Heart right ventricle (tissue), 16 donors: ENCODE measurements at regions of chr6 and their contacts with region 1.

Region 1: GRCh38 chr6:10510592-10511367 is 10.4 kb upstream of the GCNT2 start:
- DNase-seq: peak; percentile 59 to 65
- ATAC-seq: peak; percentile 89 to 97 (median 94)
- H3K4me3 ChIP-seq: peak overlapping the region in 6 of 10 donors; percentile 7 to 18 (median 12)
- H3K27ac ChIP-seq: peak overlapping the region; percentile 49 to 92 (median 82)
- H3K4me1 ChIP-seq: peaks cover 0 to 30% (median 5%) of the 10 kb centered on the region in 9 donors
- H3K27me3 ChIP-seq: no peaks in the 10 kb centered on the region
- CTCF ChIP-seq: peak; percentile 41 to 80 (median 65)

Region 2: GRCh38 chr6:10175330-10175729 is 335.4 kb before region 1 on chr6:
- intact Hi-C with region 1: no loop called
- DNase-seq: no peak
- ATAC-seq: no peak
- H3K4me3 ChIP-seq: no peak overlapping the region
- H3K27ac ChIP-seq: no peak overlapping the region
- H3K4me1 ChIP-seq: no peaks in the 10 kb centered on the region
- H3K27me3 ChIP-seq: no peaks in the 10 kb centered on the region
- CTCF ChIP-seq: no peak

Region 3: GRCh38 chr6:10555625-10556309 is 45.0 kb after region 1 on chr6:
- intact Hi-C with region 1: loop called in 1 of 10 experiments (anchors 5 kb)
- DNase-seq: peak; percentile 66 to 72
- ATAC-seq: peak; percentile 72 to 95 (median 88)
- H3K4me3 ChIP-seq: peak overlapping the region in 9 of 10 donors; percentile 2 to 50 (median 42)
- H3K27ac ChIP-seq: peak overlapping the region in 9 of 10 donors; percentile 50 to 81 (median 73)
- H3K4me1 ChIP-seq: peaks cover 4 to 57% (median 24%) of the 10 kb centered on the region in 9 donors
- H3K27me3 ChIP-seq: peaks cover 0 to 11% (median 0%) of the 10 kb centered on the region in 7 donors
- CTCF ChIP-seq: no peak

Region 4: GRCh38 chr6:10585209-10585845 is 74.5 kb after region 1 on chr6:
- intact Hi-C with region 1: loop called in 2 of 10 experiments (anchors 2 to 5 kb)
- DNase-seq: no peak
- ATAC-seq: peak in 7 of 8 donors; percentile 40 to 75 (median 51)
- H3K4me3 ChIP-seq: peak overlapping the region in 9 of 10 donors; percentile 7 to 60 (median 39)
- H3K27ac ChIP-seq: peak overlapping the region in 7 of 10 donors; percentile 10 to 83 (median 75)
- H3K4me1 ChIP-seq: peaks cover 0 to 40% (median 11%) of the 10 kb centered on the region in 9 donors
- H3K27me3 ChIP-seq: no peaks in the 10 kb centered on the region
- CTCF ChIP-seq: no peak

Region 5: DNA sequence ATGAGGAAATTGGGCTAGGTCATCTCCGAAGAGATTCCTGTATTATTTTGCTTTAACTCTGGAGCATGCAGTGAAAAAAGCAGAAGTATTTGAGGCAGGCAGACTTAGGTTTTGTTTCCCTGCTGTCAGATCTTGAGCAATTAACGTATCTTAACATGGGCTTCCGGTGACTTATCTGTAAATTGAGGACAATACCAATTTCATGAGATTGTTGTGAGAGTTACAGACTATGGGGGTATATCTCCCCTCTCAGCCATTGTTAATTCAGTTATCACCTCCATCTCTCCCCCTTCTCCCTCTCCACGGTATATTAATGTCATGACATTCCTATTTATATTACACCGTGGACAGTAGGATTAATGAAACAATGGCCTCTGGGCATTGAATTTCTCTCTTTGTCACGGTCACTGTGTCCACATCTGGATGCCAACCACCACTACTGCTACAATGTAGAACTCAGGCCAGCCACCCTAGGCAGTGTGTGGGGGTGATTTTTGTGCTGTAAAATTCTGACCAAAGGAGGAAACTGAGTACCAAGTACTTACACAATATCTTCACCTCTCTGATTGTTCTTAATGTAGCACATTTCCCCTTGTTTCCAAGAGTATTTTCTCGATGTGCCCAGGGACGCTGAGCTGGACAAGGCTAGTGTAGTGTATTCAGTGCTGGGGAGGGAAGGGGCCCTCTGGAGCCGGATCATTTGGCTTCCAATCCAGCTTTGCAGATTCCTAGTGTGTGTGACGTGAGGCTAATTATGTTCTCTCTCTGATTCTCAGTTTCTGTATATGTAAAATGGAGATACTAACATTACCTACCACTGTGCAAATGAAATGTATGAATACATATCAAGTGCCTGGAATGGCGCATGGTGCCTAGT is 87.5 kb after region 1 on chr6:
- intact Hi-C with region 1: no loop called
- DNase-seq: no peak
- ATAC-seq: peak in 6 of 8 donors; percentile 31 to 75 (median 58)
- H3K4me3 ChIP-seq: no peak overlapping the region
- H3K27ac ChIP-seq: peak overlapping the region in 8 of 10 donors; percentile 5 to 37 (median 24)
- H3K4me1 ChIP-seq: peaks cover 0 to 47% (median 26%) of the 10 kb centered on the region in 9 donors
- H3K27me3 ChIP-seq: no peaks in the 10 kb centered on the region
- CTCF ChIP-seq: no peak

Region 6: GRCh38 chr6:10609995-10610688 is 99.4 kb after region 1 on chr6:
- intact Hi-C with region 1: loop called in 1 of 10 experiments (anchors 5 kb)
- DNase-seq: peak; percentile 30 to 67
- ATAC-seq: peak; percentile 70 to 93 (median 81)
- H3K4me3 ChIP-seq: no peak overlapping the region
- H3K27ac ChIP-seq: peak overlapping the region; percentile 54 to 85 (median 77)
- H3K4me1 ChIP-seq: peaks cover 0 to 42% (median 12%) of the 10 kb centered on the region in 9 donors
- H3K27me3 ChIP-seq: no peaks in the 10 kb centered on the region
- CTCF ChIP-seq: no peak

Region 7: DNA sequence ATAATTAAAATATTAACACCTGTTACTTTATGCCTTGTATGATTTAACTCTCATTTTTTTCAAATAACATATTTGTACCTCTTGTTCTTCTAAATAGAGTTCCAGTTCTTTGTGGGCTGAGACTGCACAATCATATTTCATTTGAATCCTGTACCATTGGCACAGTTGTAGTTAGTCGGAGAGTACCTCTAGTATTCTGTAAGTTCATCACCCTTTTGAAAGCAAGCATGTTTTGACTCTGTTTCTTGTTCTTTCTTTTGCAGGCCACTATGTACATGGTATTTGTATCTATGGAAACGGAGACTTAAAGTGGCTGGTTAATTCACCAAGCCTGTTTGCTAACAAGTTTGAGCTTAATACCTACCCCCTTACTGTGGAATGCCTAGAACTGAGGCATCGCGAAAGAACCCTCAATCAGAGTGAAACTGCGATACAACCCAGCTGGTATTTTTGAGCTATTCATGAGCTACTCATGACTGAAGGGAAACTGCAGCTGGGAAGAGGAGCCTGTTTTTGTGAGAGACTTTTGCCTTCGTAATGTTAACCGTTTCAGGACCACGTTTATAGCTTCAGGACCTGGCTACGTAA is 115.5 kb after region 1 on chr6:
- intact Hi-C with region 1: loop called in 1 of 10 experiments (anchors 10 kb)
- DNase-seq: no peak
- ATAC-seq: no peak
- H3K4me3 ChIP-seq: no peak overlapping the region
- H3K27ac ChIP-seq: no peak overlapping the region
- H3K4me1 ChIP-seq: peaks cover 0 to 5% (median 0%) of the 10 kb centered on the region in 9 donors
- H3K27me3 ChIP-seq: no peaks in the 10 kb centered on the region
- CTCF ChIP-seq: no peak